ENCODE measurements at regions of chr9 and their contacts with region 1.

Region 1: GRCh38 chr9:105712773-105713172 is 18.4 kb downstream of the TMEM38B start:
- DNase-seq: no peak
- H3K4me3 Mint-ChIP-seq: no peak overlapping the region
- H3K27ac Mint-ChIP-seq: no peak overlapping the region
- H3K4me1 Mint-ChIP-seq: peaks cover 6% of the 10 kb centered on the region
- H3K27me3 Mint-ChIP-seq: no peaks in the 10 kb centered on the region

Region 2: GRCh38 chr9:105447814-105448812 is 264.7 kb before region 1 on chr9 and contains the start of gene FSD1L:
- CTCF ChIA-PET with region 1: interaction called, 4 read pairs
- intact Hi-C with region 1: loop called (anchors 5 kb)
- DNase-seq: peak; percentile 87
- H3K4me3 Mint-ChIP-seq: peak within 1 kb of the TSS; percentile 79
- H3K27ac Mint-ChIP-seq: no peak within 1 kb of the TSS
- H3K4me1 Mint-ChIP-seq: peaks cover 10% of the 10 kb centered on the region
- H3K27me3 Mint-ChIP-seq: no peaks in the 10 kb centered on the region
- total RNA-seq, gene FSD1L: 0.79 to 0.86 TPM

Region 3: GRCh38 chr9:105637787-105638395 is 74.9 kb before region 1 on chr9:
- CTCF ChIA-PET with region 1: interaction called, 13 read pairs
- intact Hi-C with region 1: loop called (anchors 5 kb)
- DNase-seq: no peak
- H3K4me3 Mint-ChIP-seq: no peak overlapping the region
- H3K27ac Mint-ChIP-seq: no peak overlapping the region
- H3K4me1 Mint-ChIP-seq: no peaks in the 10 kb centered on the region
- H3K27me3 Mint-ChIP-seq: no peaks in the 10 kb centered on the region

Region 4: GRCh38 chr9:105656131-105656921 is 56.4 kb before region 1 on chr9:
- CTCF ChIA-PET with region 1: interaction called, 17 read pairs
- intact Hi-C with region 1: no loop called
- DNase-seq: peak; percentile 33
- H3K4me3 Mint-ChIP-seq: peak overlapping the region; percentile 67
- H3K27ac Mint-ChIP-seq: no peak overlapping the region
- H3K4me1 Mint-ChIP-seq: peaks cover 7% of the 10 kb centered on the region
- H3K27me3 Mint-ChIP-seq: peaks cover 34% of the 10 kb centered on the region